ENCODE measurements at regions of chr3 and their contacts with region 1.

Region 1: GRCh38 chr3:30611613-30612436 is 5.4 kb downstream of the TGFBR2 start:
- DNase-seq: no peak
- H3K4me3 Mint-ChIP-seq: peak overlapping the region; percentile 86
- H3K27ac Mint-ChIP-seq: peak overlapping the region; percentile 96
- H3K4me1 Mint-ChIP-seq: peaks cover 72% of the 10 kb centered on the region
- H3K27me3 Mint-ChIP-seq: no peaks in the 10 kb centered on the region

Region 2: DNA sequence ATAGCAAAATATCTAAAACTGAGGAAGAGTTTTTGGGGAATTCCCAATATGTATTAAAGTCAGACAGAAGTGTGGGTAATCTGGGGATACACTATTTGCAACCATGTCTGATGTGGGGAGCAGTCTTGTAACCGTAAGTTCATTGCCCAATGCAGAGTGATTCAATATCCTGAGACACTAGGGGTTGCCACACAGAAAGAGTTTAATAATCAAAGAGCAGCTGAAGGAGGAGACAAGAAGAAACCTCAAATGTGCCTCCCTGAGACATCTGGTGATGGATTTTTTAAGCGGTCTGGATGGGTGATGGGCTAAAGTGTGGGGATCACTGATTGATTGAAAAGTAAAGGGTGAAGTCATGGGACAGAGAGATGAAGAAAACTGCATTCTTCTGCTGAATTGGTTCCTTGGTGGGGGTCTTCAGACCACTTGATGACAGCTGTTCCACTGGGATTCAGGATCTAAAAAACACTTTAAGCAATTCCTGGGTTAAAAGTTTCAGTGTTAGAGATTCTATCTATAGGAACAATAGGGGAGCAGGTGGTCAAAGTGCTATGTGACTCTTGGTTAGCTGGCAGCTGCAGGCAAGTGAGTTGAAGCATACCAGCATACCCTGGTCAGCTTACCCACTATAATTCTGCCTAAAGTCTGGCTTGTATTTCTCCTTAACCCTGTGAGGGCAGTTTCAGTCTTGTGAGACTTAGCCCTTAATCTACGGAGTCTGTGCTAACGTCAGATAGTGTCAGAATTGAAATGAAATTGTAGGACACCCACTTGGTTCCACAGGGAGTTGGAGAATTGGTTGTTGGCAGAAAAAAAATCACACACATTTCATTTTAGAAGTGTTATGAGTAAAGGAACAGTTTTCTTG is 431.3 kb before region 1 on chr3:
- CTCF ChIA-PET with region 1: no interaction called
- POLR2A ChIA-PET with region 1: no interaction called
- intact Hi-C with region 1: no loop called
- DNase-seq: no peak
- H3K4me3 Mint-ChIP-seq: no peak overlapping the region
- H3K27ac Mint-ChIP-seq: no peak overlapping the region
- H3K4me1 Mint-ChIP-seq: no peaks in the 10 kb centered on the region
- H3K27me3 Mint-ChIP-seq: peaks cover 3% of the 10 kb centered on the region

Region 3: DNA sequence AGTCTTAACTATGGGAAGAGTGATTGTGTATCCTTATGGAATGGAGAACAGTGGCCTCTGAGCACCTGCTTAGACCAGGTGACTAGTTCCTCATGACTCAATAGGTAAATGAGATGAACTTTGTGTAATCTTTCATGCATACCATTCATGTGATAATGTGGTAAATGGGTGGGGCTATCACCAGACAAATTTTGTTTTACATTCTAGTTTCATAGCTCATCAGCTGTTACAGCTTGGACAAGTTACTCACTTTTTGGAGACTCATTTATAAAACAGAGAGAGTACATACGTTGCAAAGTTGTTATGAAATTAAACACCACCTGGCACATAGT is 109.1 kb before region 1 on chr3:
- CTCF ChIA-PET with region 1: interaction called, 3 read pairs
- POLR2A ChIA-PET with region 1: interaction called, 9 read pairs
- intact Hi-C with region 1: loop called (anchors 1 kb)
- DNase-seq: no peak
- H3K4me3 Mint-ChIP-seq: no peak overlapping the region
- H3K27ac Mint-ChIP-seq: peak overlapping the region; percentile 70
- H3K4me1 Mint-ChIP-seq: peaks cover 46% of the 10 kb centered on the region
- H3K27me3 Mint-ChIP-seq: no peaks in the 10 kb centered on the region

Region 4: DNA sequence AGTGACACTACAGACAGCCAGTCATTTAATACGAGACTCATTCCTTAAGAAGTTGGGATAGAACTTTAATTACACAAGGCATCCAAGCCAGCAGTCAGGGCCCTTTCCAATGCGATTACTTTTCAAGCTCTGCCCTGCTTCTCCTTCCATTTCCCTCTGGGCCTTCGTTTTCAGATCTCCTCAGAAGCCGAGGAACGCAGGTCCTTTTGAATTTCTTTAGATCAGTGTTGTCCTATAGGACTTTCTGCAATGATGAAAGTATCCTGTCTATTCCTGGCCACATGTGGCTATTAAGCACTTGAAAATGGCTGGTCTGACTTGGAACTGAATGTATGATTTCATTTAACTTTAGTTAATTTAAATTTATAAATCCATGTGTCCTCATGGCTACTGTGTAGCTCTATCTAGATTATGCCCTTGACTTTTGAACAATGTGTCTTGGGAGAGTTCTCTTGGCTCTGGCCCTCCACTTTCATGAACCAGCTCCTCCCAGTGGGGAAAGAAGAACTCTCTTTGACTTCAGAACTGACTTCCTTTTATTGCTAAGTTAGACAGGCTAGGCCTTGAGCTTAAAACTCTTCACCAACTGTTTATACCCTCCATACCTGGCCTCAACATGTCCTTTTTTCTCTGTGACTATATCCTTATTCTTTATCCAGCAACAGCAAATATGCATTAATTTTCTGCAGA is 17.2 kb after region 1 on chr3:
- CTCF ChIA-PET with region 1: interaction called, 12 read pairs
- POLR2A ChIA-PET with region 1: interaction called, 182 read pairs
- intact Hi-C with region 1: loop called (anchors 1 kb)
- DNase-seq: no peak
- H3K4me3 Mint-ChIP-seq: peak overlapping the region; percentile 45
- H3K27ac Mint-ChIP-seq: peak overlapping the region; percentile 91
- H3K4me1 Mint-ChIP-seq: peaks cover 90% of the 10 kb centered on the region
- H3K27me3 Mint-ChIP-seq: no peaks in the 10 kb centered on the region

Region 5: DNA sequence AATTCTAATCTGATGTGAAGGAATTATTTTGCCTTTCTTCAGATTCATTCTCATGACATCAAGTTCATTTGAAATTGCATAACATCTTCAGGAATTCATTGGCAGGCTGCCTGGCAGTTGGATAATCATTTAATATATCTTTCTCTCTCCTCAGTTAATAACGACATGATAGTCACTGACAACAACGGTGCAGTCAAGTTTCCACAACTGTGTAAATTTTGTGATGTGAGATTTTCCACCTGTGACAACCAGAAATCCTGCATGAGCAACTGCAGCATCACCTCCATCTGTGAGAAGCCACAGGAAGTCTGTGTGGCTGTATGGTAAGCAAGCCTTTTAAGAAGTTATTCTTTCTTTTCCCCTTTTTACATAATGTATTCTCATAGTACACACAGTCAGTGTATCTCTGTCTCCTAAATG is 32.8 kb after region 1 on chr3:
- CTCF ChIA-PET with region 1: interaction called, 5 read pairs
- POLR2A ChIA-PET with region 1: interaction called, 16 read pairs
- intact Hi-C with region 1: loop called (anchors 1 kb)
- DNase-seq: peak; percentile 75
- H3K4me3 Mint-ChIP-seq: peak overlapping the region; percentile 50
- H3K27ac Mint-ChIP-seq: peak overlapping the region; percentile 94
- H3K4me1 Mint-ChIP-seq: peaks cover 92% of the 10 kb centered on the region
- H3K27me3 Mint-ChIP-seq: no peaks in the 10 kb centered on the region

Region 6: GRCh38 chr3:30681643-30682211 is 69.9 kb after region 1 on chr3:
- CTCF ChIA-PET with region 1: no interaction called
- POLR2A ChIA-PET with region 1: interaction called, 6 read pairs
- intact Hi-C with region 1: loop called (anchors 2 kb)
- DNase-seq: no peak
- H3K4me3 Mint-ChIP-seq: no peak overlapping the region
- H3K27ac Mint-ChIP-seq: peak overlapping the region; percentile 65
- H3K4me1 Mint-ChIP-seq: peaks cover 86% of the 10 kb centered on the region
- H3K27me3 Mint-ChIP-seq: no peaks in the 10 kb centered on the region

Measured in activated CD4-positive, alpha-beta memory T cell treated with anti-CD3 and anti-CD28 coated beads for 36 hours (primary cell).